ENCODE measurements at regions of chr17 and their contacts with region 1.

Region 1: GRCh38 chr17:74379495-74380085 is 12.3 kb downstream of the GPR142 start:
- DNase-seq: peak; percentile 80
- ATAC-seq: peak; percentile 90
- H3K4me3 Mint-ChIP-seq: no peak overlapping the region
- H3K27ac Mint-ChIP-seq: no peak overlapping the region
- H3K4me1 Mint-ChIP-seq: peaks cover 2% of the 10 kb centered on the region
- H3K27me3 Mint-ChIP-seq: peaks cover 26% of the 10 kb centered on the region
- CTCF ChIP-seq: no peak

Region 2: DNA sequence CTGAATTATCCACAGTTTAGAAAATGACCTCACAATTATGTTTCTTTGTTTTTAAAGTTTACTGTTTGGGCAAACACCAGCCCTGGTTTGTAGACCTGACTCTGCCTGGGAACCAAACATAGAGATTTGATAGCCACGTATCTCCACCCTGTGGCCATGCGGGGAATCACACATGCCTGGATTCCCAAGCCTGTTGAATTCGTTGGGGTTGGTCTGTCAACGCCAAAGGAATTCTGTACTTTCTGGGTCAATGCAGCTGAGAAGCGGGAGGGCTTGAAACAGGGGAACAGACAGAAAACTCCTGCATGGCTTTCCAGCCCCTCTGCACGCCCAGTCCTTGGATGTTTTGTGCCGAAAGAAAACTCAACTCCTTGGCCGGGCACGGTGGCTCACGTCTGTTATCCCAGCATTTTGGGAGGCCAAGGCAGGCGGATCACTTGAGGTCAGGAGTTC is 113.8 kb after region 1 on chr17:
- CTCF ChIA-PET with region 1: interaction called, 5 read pairs
- POLR2A ChIA-PET with region 1: no interaction called
- intact Hi-C with region 1: loop called (anchors 1 kb)
- DNase-seq: peak; percentile 42
- ATAC-seq: peak; percentile 75
- H3K4me3 Mint-ChIP-seq: no peak overlapping the region
- H3K27ac Mint-ChIP-seq: no peak overlapping the region
- H3K4me1 Mint-ChIP-seq: no peaks in the 10 kb centered on the region
- H3K27me3 Mint-ChIP-seq: peaks cover 3% of the 10 kb centered on the region
- CTCF ChIP-seq: peak; percentile 62

Region 3: DNA sequence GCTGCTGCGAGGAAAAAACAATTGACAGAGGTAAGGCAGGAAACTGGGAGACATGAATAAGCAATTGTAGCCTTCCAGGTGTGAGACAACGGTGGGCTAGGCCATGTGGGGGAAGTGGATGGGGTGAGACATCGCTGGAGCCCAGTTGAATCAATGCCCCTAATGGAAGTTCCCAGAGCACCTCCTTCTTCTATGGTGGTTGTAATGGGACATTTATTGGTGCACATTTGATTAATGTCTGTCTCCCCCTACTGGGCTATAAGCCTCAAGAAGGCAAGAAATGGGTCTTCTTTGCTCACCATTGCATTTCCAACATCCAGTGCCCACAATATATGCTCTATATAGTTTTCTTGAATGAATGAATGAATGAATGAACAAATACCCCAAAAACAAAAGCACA is 266.6 kb after region 1 on chr17:
- CTCF ChIA-PET with region 1: no interaction called
- POLR2A ChIA-PET with region 1: no interaction called
- intact Hi-C with region 1: loop called (anchors 1 kb)
- DNase-seq: no peak
- ATAC-seq: peak; percentile 45
- H3K4me3 Mint-ChIP-seq: no peak overlapping the region
- H3K27ac Mint-ChIP-seq: peak overlapping the region; percentile 31
- H3K4me1 Mint-ChIP-seq: peaks cover 46% of the 10 kb centered on the region
- H3K27me3 Mint-ChIP-seq: peaks cover 34% of the 10 kb centered on the region
- CTCF ChIP-seq: no peak

Region 4: DNA sequence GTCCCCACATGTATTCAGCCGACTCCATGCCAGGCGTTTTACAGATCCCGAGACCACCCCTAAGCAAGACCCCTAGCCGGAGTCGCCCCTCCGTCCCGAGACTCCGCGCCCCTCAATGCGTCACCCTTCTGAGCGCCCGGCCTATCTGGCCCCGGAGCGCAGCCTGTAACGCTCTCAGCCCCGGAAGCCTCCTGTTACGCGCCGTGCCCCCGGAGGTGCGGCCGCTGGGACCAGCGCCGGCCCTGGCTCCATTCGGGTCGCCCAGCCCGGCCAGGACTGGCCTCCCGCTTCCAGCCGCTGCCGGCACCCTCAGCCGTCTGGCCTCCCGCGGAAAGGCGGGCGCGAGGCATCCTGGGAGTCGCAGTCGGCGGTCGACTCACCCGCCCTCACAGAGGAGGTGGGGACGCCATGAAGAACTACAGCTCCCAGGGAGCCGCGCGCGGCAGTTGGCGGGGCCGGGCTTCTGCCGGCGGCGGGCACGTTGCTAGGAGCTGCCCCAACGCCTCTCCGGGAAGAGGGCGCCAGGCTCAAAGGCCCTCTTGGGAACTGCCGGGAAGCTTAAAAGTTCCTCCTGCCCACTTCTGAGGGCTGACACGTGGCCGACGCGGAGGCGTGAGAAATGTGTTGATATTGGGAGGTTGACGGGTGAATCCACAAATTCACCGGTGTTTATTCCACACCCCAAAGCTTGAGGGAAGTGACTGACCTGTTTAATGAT is 1561.3 kb after region 1 on chr17 and contains the start of gene FBF1:
- CTCF ChIA-PET with region 1: no interaction called
- POLR2A ChIA-PET with region 1: no interaction called
- intact Hi-C with region 1: no loop called
- DNase-seq: peak; percentile 83
- ATAC-seq: peak; percentile 100
- H3K4me3 Mint-ChIP-seq: peak within 1 kb of the TSS; percentile 86
- H3K27ac Mint-ChIP-seq: peak within 1 kb of the TSS; percentile 61
- H3K4me1 Mint-ChIP-seq: peaks cover 13% of the 10 kb centered on the region
- H3K27me3 Mint-ChIP-seq: no peaks in the 10 kb centered on the region
- CTCF ChIP-seq: no peak
- total RNA-seq, gene FBF1: 13.2 and 15.1 TPM in 2 replicates